Right cardiac atrium (tissue), 5 donors: ENCODE measurements at regions of chr20 and their contacts with region 1.

Region 1: GRCh38 chr20:45095753-45096371 is 5.1 kb downstream of the KCNS1 start:
- DNase-seq: peak in 2 of 3 donors; percentile 31 to 56
- ATAC-seq: peak in 1 of 2 donors; percentile 62
- H3K4me3 ChIP-seq: no peak overlapping the region
- H3K27ac ChIP-seq: no peak overlapping the region
- H3K4me1 ChIP-seq: no peaks in the 10 kb centered on the region
- H3K27me3 ChIP-seq: no peaks in the 10 kb centered on the region

Region 2: DNA sequence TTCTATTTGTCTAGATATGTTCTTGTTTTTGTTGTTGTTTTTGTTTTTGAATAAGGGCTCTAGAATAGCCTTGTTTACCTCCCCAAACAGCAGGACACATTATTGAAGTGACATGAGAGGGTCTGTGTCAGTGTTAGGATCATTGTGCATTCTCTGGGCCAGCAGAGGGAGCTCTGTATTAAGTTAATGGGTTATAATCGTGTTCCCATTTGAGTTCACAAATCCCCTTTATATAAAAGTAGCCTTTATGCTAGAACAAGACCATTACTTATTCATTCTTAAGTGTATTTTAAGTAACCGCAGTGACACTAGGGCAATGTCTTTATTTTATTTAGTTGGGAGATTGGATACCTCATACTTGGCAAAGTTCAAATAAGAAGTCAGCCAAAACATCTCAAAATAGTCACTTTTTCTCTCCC is 84.7 kb before region 1 on chr20:
- intact Hi-C with region 1: loop called in 3 of 4 experiments (anchors 2 to 10 kb)
- DNase-seq: peak in 2 of 3 donors; percentile 33 to 65
- ATAC-seq: peak; percentile 71 to 72
- H3K4me3 ChIP-seq: no peak overlapping the region
- H3K27ac ChIP-seq: no peak overlapping the region
- H3K4me1 ChIP-seq: no peaks in the 10 kb centered on the region
- H3K27me3 ChIP-seq: no peaks in the 10 kb centered on the region

Region 3: DNA sequence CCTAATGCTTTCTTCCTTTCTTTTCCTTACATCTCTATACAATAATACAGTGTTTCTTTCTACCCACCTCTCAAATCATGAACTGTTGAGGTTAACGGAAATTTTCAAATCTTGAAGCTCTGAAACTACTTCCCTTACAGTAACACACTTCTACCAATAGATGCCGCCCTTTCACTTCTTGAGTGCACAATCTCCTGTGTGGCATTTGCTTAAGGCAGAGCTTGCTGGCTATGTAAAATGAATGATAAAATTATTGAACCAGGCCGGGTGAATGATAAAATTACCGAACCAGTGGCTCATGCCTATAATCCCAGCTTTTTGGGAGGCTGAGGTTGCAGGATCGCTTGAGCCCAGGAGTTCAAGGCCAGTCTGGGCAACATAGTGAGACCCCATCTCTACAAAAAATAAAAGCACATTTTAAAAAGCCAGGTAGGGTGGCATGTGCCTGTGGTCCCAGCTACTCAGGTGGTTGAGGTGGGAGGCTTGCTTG is 51.7 kb before region 1 on chr20:
- intact Hi-C with region 1: loop called in 3 of 4 experiments (anchors 5 to 10 kb)
- DNase-seq: no peak
- ATAC-seq: peak; percentile 62 to 80
- H3K4me3 ChIP-seq: no peak overlapping the region
- H3K27ac ChIP-seq: no peak overlapping the region
- H3K4me1 ChIP-seq: no peaks in the 10 kb centered on the region
- H3K27me3 ChIP-seq: no peaks in the 10 kb centered on the region

Region 4: DNA sequence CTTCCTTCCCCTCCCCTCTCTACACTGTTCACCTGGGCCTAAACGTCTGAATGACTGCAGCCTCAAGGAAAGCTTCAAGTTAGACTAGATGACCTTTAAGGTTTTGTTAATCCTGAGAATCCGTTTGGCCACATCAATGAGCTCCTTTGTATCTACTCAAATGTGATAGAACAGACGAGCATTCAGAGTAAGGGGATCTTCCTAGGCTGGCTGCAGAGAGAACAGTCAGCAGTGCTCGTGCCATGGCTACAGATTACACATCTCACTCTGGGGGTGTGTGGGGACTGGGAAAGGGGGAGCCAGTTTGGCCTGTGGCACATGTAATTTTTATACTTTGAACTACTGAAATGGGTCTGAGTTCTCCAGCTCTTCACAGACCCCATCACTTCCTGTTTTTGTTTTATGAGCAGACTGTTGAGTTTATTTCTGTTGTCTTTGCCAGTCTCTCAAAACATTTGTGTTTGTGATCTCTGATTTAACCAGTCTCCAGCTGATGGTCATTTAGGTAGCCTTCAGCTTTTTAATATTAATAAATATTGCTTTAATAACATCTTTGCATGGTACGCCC is 45.9 kb before region 1 on chr20:
- intact Hi-C with region 1: loop called in 3 of 4 experiments (anchors 5 to 10 kb)
- DNase-seq: no peak
- ATAC-seq: peak in 1 of 2 donors; percentile 11
- H3K4me3 ChIP-seq: no peak overlapping the region
- H3K27ac ChIP-seq: peak overlapping the region; percentile 22
- H3K4me1 ChIP-seq: peaks cover 6% of the 10 kb centered on the region
- H3K27me3 ChIP-seq: no peaks in the 10 kb centered on the region

Region 5: DNA sequence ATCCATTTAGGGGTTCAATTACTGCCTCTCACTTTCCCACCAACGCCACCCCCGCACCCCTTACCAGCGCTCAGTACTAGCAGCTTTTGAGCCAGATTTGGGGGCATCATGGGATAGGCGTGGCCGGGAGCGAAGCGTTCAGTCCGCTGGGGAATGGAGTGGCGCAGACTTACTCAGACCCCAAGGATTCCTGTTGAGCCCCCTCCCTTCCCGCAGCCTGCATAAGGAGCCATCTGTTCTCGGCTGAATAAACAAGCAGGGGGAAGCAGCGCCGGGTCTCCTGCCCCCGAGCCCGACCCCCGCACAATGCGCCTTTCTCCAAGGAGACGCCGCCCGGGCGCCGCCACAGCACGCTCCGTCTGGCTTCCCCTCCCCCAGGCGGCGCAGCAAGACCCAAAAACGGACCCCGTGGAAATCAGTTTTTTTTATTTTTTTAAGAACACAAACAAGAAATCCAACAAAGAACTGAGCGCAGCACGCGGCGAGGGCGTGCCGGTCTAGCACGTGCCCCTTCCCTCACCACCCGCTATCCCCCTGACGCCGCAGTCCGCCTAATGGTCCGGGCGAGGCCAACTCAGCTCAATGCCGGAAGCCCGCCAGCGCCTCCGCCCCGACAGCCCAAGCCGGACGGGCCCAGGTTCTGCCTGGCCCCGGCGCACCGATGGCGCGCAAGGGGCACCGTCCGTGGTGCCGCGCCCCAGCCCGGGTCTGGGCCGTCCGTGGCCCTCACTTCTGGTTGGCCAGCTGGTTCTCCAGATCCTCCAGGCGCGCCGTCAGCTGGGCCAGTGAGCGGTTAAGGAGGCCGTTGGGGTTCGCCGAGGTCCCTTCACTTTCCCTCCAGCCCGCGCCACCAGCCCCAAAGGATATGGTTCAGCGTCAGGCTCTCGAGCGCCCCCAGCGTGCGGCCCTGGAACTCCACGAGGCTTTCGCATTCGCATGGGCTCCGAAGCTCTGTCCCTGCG is 197.5 kb after region 1 on chr20:
- intact Hi-C with region 1: loop called in 1 of 4 experiments (anchors 5 kb)
- DNase-seq: peak; percentile 85 to 94 (median 93)
- ATAC-seq: peak; percentile 86 to 92
- H3K4me3 ChIP-seq: peak overlapping the region; percentile 47
- H3K27ac ChIP-seq: no peak overlapping the region
- H3K4me1 ChIP-seq: no peaks in the 10 kb centered on the region
- H3K27me3 ChIP-seq: no peaks in the 10 kb centered on the region